A673 (cell line): ENCODE measurements at regions of chr1 and their contacts with region 1.

Region 1: GRCh38 chr1:216812966-216813365 is 89.7 kb upstream of the ESRRG start:
- DNase-seq: no peak
- H3K4me3 ChIP-seq: no peak overlapping the region
- H3K27ac ChIP-seq: no peak overlapping the region
- H3K4me1 ChIP-seq: no peaks in the 10 kb centered on the region
- H3K27me3 ChIP-seq: peaks cover 40% of the 10 kb centered on the region
- CTCF ChIP-seq: no peak

Region 2: DNA sequence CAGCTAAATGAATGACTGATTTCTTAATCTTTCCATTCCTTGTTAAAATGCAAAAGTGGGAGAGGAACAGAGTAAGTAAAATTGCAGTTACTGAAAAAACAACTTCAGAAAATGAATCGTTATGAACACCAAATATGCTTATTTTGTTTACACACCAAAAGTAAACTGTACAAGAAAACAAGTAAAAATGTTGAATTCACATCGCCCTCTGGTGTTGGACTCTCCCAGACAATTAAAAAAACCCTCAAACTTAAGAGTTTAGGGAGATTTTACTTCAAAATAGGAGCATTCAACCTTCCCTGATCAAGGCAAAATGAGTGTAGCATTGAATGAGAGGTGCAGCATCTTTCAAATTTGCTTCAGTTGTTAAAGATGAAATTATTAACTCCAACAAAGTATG is 70.3 kb before region 1 on chr1:
- CTCF ChIA-PET with region 1: no interaction called
- POLR2A ChIA-PET with region 1: interaction called, 21 read pairs
- intact Hi-C with region 1: no loop called
- DNase-seq: no peak
- H3K4me3 ChIP-seq: no peak overlapping the region
- H3K27ac ChIP-seq: no peak overlapping the region
- H3K4me1 ChIP-seq: no peaks in the 10 kb centered on the region
- H3K27me3 ChIP-seq: peaks cover 17% of the 10 kb centered on the region
- CTCF ChIP-seq: peak; percentile 41; the same call in 1 of the 2 replicates